ENCODE measurements at regions of chr22 and their contacts with region 1.

Region 1: DNA sequence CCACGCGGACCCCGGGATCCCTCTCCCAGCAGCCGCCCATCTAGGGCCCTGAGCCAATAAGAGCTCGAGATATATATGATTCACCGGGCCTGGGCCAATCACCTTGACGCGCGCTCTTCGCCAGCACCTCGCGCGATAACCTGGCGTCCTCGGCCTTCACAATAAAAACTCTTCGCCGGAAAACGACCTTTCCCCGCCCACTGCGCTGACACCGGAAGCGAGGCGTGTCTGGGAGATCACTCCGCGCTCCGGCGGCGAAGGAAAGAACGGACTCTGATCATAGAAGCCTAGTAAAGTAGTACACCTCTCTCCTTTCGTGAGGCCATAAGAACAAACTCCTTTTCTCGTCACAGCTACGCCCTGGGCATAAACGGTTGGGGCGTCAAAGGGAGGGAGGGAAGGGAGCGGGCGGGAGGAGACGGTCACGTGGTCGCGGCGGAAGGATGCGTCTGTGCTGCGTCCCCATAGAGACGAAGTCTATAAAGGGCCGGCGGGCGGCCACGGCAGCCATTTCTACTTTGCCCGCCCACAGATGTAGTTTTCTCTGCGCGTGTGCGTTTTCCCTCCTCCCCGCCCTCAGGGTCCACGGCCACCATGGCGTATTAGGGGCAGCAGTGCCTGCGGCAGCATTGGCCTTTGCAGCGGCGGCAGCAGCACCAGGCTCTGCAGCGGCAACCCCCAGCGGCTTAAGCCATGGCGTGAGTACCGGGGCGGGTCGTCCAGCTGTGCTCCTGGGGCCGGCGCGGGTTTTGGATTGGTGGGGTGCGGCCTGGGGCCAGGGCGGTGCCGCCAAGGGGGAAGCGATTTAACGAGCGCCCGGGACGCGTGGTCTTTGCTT is at the start of gene ATF4:
- DNase-seq: peak; percentile 97 to 98 (median 98)
- H3K4me3 ChIP-seq: peak within 1 kb of the TSS; percentile 100
- H3K27ac ChIP-seq: peak within 1 kb of the TSS; percentile 86 to 95
- H3K4me1 ChIP-seq: peaks cover 13% of the 10 kb centered on the region
- H3K27me3 ChIP-seq: no peaks in the 10 kb centered on the region
- CTCF ChIP-seq: peak in 2 of 3 donors; percentile 14 to 35
- EP300 ChIP-seq: no peak
- POLR2A ChIP-seq: peak; percentile 99
- total RNA-seq, gene ATF4: 212 to 611 (median 246) TPM

Region 2: GRCh38 chr22:39152511-39153219 is 367.6 kb before region 1 on chr22 and contains the start of gene CBX7:
- intact Hi-C with region 1: loop called in 1 of 4 experiments (anchors 10 kb)
- DNase-seq: peak; percentile 94 to 97 (median 96)
- H3K4me3 ChIP-seq: peak within 1 kb of the TSS; percentile 97
- H3K27ac ChIP-seq: peak within 1 kb of the TSS; percentile 94 to 97
- H3K4me1 ChIP-seq: peaks cover 15% of the 10 kb centered on the region
- H3K27me3 ChIP-seq: no peaks in the 10 kb centered on the region
- CTCF ChIP-seq: no peak
- EP300 ChIP-seq: peak; percentile 12
- POLR2A ChIP-seq: peak; percentile 91
- total RNA-seq, gene CBX7: 47.2 to 107 (median 84.9) TPM

Region 3: DNA sequence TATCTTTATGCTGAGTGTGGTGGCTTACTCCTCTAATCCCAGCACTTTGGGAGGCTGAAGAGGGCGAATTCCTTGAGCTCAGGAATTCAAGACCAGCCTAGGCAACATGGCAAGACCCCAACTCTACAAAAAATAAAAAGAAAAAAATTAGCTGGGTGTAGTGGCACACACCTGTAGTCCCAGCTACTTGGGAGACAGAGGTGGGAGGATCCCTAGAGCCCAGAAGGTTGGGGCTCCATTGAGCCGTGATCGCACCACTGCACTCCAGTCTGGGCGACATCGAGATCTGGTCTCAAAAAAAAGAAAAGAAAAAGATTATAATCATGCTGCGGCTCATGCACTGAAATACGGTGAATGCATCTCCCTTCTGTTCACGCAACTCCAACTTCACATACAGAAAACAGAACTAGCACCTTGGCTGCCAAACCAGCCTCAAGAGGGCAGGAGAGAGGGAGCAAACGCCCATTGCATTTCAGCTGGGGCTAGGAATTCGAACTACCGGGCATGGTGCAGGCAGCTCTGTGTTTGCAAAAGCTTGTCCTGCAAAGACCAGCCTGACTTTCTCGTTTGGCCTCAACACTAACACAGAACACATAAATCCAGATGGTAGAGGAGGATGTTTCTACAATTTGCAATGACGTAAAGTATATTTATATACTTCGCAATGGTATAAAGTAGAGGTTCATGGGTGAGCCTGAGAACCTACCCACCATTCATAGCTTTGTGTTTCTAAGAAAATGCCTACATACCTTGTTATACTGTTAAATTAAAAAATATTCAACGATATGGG is 176.8 kb before region 1 on chr22:
- intact Hi-C with region 1: loop called in 1 of 4 experiments (anchors 10 kb)
- DNase-seq: peak; percentile 54 to 76 (median 65)
- H3K4me3 ChIP-seq: no peak overlapping the region
- H3K27ac ChIP-seq: no peak overlapping the region
- H3K4me1 ChIP-seq: no peaks in the 10 kb centered on the region
- H3K27me3 ChIP-seq: no peaks in the 10 kb centered on the region
- CTCF ChIP-seq: peak in 2 of 3 donors; percentile 46 to 57
- EP300 ChIP-seq: no peak
- POLR2A ChIP-seq: no peak

Region 4: GRCh38 chr22:39496131-39496838 is 24.0 kb before region 1 on chr22:
- intact Hi-C with region 1: loop called in 1 of 4 experiments (anchors 2 kb)
- DNase-seq: peak; percentile 57 to 80 (median 68)
- H3K4me3 ChIP-seq: no peak overlapping the region
- H3K27ac ChIP-seq: no peak overlapping the region
- H3K4me1 ChIP-seq: peaks cover 3% of the 10 kb centered on the region
- H3K27me3 ChIP-seq: no peaks in the 10 kb centered on the region
- CTCF ChIP-seq: peak; percentile 51 to 70 (median 52)
- EP300 ChIP-seq: no peak
- POLR2A ChIP-seq: no peak